A673 (cell line): ENCODE measurements at regions of chr6 and their contacts with region 1.

Region 1: GRCh38 chr6:17917837-17918763 is 69.3 kb downstream of the KIF13A start:
- DNase-seq: no peak
- H3K4me3 ChIP-seq: no peak overlapping the region
- H3K27ac ChIP-seq: no peak overlapping the region
- H3K4me1 ChIP-seq: no peaks in the 10 kb centered on the region
- H3K27me3 ChIP-seq: no peaks in the 10 kb centered on the region
- CTCF ChIP-seq: no peak

Region 2: DNA sequence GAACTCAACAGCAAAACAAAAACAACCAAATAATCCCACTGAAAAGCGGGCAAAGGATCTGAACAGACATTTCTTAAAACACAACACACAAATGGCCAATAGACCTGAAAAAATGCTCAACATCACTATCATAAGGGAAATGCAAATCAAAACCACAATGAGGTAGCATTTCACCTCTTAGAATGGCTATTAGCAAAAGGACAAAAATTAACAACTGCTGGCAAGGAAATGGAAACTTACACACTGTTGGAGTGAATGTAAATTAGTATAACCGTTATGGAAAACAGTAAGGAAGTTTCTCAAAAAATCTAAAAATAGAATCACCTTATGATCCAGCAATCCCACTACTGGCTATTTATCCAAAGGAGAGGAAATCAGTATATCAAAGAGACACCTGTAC is 297.1 kb before region 1 on chr6:
- CTCF ChIA-PET with region 1: no interaction called
- POLR2A ChIA-PET with region 1: no interaction called
- intact Hi-C with region 1: no loop called
- DNase-seq: no peak
- H3K4me3 ChIP-seq: no peak overlapping the region
- H3K27ac ChIP-seq: no peak overlapping the region
- H3K4me1 ChIP-seq: peaks cover 5% of the 10 kb centered on the region
- H3K27me3 ChIP-seq: no peaks in the 10 kb centered on the region
- CTCF ChIP-seq: no peak

Region 3: GRCh38 chr6:17706580-17707370 is 211.3 kb before region 1 on chr6 and contains the start of gene NUP153:
- CTCF ChIA-PET with region 1: no interaction called
- POLR2A ChIA-PET with region 1: interaction called, 16 read pairs
- intact Hi-C with region 1: no loop called
- DNase-seq: peak; percentile 99
- H3K4me3 ChIP-seq: peak within 1 kb of the TSS; percentile 84
- H3K27ac ChIP-seq: peak within 1 kb of the TSS; percentile 97
- H3K4me1 ChIP-seq: peaks cover 21% of the 10 kb centered on the region
- H3K27me3 ChIP-seq: no peaks in the 10 kb centered on the region
- CTCF ChIP-seq: no peak
- total RNA-seq, gene NUP153: 90.1 and 104 TPM in 2 replicates

Region 4: DNA sequence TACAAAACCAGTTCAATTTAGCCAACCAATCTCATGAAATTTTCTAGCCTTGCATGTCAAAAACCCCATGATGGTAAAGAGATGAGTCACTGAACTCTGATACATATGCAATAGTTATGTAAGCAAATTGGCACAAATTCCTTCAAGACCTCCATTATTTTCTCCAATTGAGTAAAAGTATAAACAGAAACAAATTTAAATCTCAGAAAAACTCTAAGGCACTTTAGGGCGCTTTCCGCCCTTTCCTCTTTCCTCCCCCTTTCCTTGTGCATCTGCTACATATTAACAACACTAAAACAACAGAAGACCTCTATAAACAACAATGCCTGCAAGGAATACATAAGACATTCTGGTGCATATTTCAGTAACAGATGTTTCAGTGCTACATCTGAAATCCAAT is 20.8 kb after region 1 on chr6:
- CTCF ChIA-PET with region 1: no interaction called
- POLR2A ChIA-PET with region 1: no interaction called
- intact Hi-C with region 1: no loop called
- DNase-seq: peak; percentile 39
- H3K4me3 ChIP-seq: no peak overlapping the region
- H3K27ac ChIP-seq: no peak overlapping the region
- H3K4me1 ChIP-seq: peaks cover 31% of the 10 kb centered on the region
- H3K27me3 ChIP-seq: no peaks in the 10 kb centered on the region
- CTCF ChIP-seq: no peak